ENCODE measurements at regions of chr11 and their contacts with region 1.

Region 1: GRCh38 chr11:32366666-32367065 is 68.7 kb downstream of the WT1 start:
- DNase-seq: no peak
- H3K4me3 ChIP-seq: no peak overlapping the region
- H3K27ac ChIP-seq: no peak overlapping the region
- H3K4me1 ChIP-seq: no peaks in the 10 kb centered on the region
- H3K27me3 ChIP-seq: no peaks in the 10 kb centered on the region
- CTCF ChIP-seq: no peak

Region 2: GRCh38 chr11:32561835-32562234 is 195.2 kb after region 1 on chr11:
- CTCF ChIA-PET with region 1: no interaction called
- POLR2A ChIA-PET with region 1: no interaction called
- intact Hi-C with region 1: no loop called
- DNase-seq: no peak
- H3K4me3 ChIP-seq: no peak overlapping the region
- H3K27ac ChIP-seq: no peak overlapping the region
- H3K4me1 ChIP-seq: no peaks in the 10 kb centered on the region
- H3K27me3 ChIP-seq: no peaks in the 10 kb centered on the region
- CTCF ChIP-seq: no peak

Region 3: DNA sequence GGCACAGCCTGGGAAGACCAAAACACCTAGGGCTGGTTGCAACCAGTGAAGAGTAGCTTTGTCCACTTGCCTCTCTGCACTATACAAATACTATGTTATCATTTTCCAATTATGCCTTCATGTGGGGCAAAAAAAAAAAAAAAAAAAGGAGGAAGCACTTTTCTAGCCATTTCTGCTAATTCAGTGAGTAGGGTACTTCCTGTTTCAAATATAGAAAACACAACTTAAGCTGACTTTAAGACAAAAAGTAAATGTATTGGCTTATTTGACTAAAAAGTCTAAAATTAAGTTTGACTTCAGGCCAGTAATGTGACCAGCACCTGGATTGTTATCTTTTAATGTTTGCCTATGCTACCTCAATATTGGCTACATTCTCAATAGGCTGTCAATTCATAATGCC is 412.5 kb after region 1 on chr11:
- CTCF ChIA-PET with region 1: interaction called, 10 read pairs
- POLR2A ChIA-PET with region 1: no interaction called
- intact Hi-C with region 1: no loop called
- DNase-seq: no peak
- H3K4me3 ChIP-seq: no peak overlapping the region
- H3K27ac ChIP-seq: no peak overlapping the region
- H3K4me1 ChIP-seq: no peaks in the 10 kb centered on the region
- H3K27me3 ChIP-seq: no peaks in the 10 kb centered on the region
- CTCF ChIP-seq: no peak